AG04450 (cell line): ENCODE measurements at regions of chr20 and their contacts with region 1.

Region 1: GRCh38 chr20:57346477-57346876 is 4.6 kb upstream of the RAE1 start:
- DNase-seq: peak; percentile 34
- H3K4me3 ChIP-seq: no peak overlapping the region
- H3K27ac ChIP-seq: no peak overlapping the region
- H3K27me3 ChIP-seq: no peaks in the 10 kb centered on the region
- CTCF ChIP-seq: peak; percentile 79

Region 2: DNA sequence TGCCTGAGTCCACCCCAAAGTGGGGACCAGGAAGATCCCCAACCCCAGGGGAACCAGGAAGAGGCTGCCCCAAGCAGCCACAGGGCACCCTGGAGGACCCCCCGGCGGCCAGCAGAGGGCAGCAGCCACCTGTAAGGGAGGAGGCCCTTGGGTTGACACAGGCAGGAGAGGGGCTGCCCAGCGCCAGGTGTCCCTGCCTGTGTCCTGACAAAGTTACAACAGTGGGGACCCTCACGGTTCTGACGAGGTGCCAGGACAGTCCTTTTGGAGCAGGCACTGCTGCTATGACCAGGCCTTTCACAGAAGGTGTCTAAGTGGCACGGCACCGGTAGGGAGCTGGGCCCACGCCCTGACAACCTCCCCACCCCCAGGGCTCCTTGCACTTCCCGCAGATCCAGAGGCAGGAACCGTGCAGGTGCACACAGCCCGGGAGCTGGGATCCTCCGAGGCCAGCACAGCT is 256.8 kb before region 1 on chr20:
- CTCF ChIA-PET with region 1: interaction called, 21 read pairs
- POLR2A ChIA-PET with region 1: no interaction called
- DNase-seq: no peak
- H3K4me3 ChIP-seq: no peak overlapping the region
- H3K27ac ChIP-seq: no peak overlapping the region
- H3K27me3 ChIP-seq: no peaks in the 10 kb centered on the region
- CTCF ChIP-seq: peak; percentile 68

Region 3: GRCh38 chr20:57162133-57162652 is 184.3 kb before region 1 on chr20:
- CTCF ChIA-PET with region 1: no interaction called
- POLR2A ChIA-PET with region 1: no interaction called
- DNase-seq: no peak
- H3K4me3 ChIP-seq: no peak overlapping the region
- H3K27ac ChIP-seq: no peak overlapping the region
- H3K27me3 ChIP-seq: no peaks in the 10 kb centered on the region
- CTCF ChIP-seq: no peak

Region 4: GRCh38 chr20:57332102-57333089 is 14.1 kb before region 1 on chr20:
- CTCF ChIA-PET with region 1: interaction called, 16 read pairs
- POLR2A ChIA-PET with region 1: no interaction called
- DNase-seq: no peak
- H3K4me3 ChIP-seq: no peak overlapping the region
- H3K27ac ChIP-seq: no peak overlapping the region
- H3K27me3 ChIP-seq: peaks cover 8% of the 10 kb centered on the region
- CTCF ChIP-seq: no peak

Region 5: GRCh38 chr20:57361212-57361915 is 14.9 kb after region 1 on chr20:
- CTCF ChIA-PET with region 1: interaction called, 10 read pairs
- POLR2A ChIA-PET with region 1: interaction called, 3 read pairs
- DNase-seq: peak; percentile 47
- H3K4me3 ChIP-seq: no peak overlapping the region
- H3K27ac ChIP-seq: peak overlapping the region; percentile 72
- H3K27me3 ChIP-seq: no peaks in the 10 kb centered on the region
- CTCF ChIP-seq: no peak